Naive thymus-derived CD4-positive, alpha-beta T cell (primary cell): ENCODE measurements at regions of chr1 and their contacts with region 1.

Region 1: DNA sequence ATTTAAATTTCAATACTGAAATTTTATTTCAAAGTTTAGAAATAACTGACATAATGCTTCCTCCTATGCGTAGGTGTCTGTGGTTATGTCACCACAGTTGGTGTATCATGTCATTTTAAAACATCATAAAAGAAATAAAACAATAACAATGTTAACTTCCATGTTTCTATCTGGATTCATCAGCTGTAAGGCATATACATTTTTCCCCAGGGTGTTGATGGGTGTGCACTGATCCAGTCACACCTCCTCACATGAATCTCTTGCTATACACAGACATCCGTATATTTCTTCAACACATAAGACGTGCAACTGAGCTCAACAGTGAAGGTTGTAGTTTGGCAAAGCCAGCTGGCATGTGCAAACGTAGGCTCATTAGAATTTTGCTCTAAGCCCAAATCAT is 6.2 kb downstream of the KCNA3 start:
- DNase-seq: peak in 5 of 9 donors; percentile 33 to 51 (median 39)
- ATAC-seq: peak; percentile 18
- H3K4me3 ChIP-seq: peak overlapping the region; percentile 97
- H3K4me3 Mint-ChIP-seq: peak overlapping the region in 9 of 10 donors; percentile 61 to 95 (median 82)
- H3K27ac ChIP-seq: peak overlapping the region; percentile 88
- H3K27ac Mint-ChIP-seq: peak overlapping the region in 8 of 9 donors; percentile 57 to 95 (median 92)
- H3K4me1 ChIP-seq: peaks cover 25 to 42% of the 10 kb centered on the region in 2 donors
- H3K4me1 Mint-ChIP-seq: peaks cover 21 to 35% (median 31%) of the 10 kb centered on the region in 7 donors
- H3K27me3 ChIP-seq: no peaks in the 10 kb centered on the region
- H3K27me3 Mint-ChIP-seq: peaks cover 0 to 2% (median 0%) of the 10 kb centered on the region in 5 donors

Region 2: DNA sequence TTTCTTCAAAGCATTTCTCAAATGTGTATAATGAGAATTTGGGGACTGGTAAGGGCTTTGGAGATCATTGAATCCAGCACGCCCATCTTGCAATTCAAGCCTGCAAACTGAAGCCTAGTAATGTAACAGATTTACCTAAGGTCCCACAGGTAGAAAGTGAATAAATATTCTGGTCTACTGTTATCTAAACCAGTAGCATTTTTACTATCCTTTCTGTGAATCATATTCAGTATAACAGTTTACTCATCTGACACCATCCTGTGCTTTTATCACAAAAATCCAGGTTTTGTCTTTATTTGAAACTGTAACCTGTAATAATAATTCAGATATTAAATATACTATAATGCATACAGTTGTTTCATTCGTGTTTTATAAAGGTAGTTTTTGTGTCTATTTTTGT is 11.2 kb before region 1 on chr1:
- CTCF ChIA-PET with region 1: interaction called, 3 read pairs
- POLR2A ChIA-PET with region 1: interaction called, 23 read pairs
- intact Hi-C with region 1: loop called in 1 of 2 experiments (anchors 1 kb)
- DNase-seq: no peak
- ATAC-seq: no peak
- H3K4me3 ChIP-seq: no peak overlapping the region
- H3K4me3 Mint-ChIP-seq: no peak overlapping the region
- H3K27ac ChIP-seq: no peak overlapping the region
- H3K27ac Mint-ChIP-seq: peak overlapping the region in 8 of 9 donors; percentile 14 to 90 (median 63)
- H3K4me1 ChIP-seq: peaks cover 4 to 13% of the 10 kb centered on the region in 2 donors
- H3K4me1 Mint-ChIP-seq: peaks cover 16 to 63% (median 47%) of the 10 kb centered on the region in 7 donors
- H3K27me3 ChIP-seq: no peaks in the 10 kb centered on the region
- H3K27me3 Mint-ChIP-seq: no peaks in the 10 kb centered on the region